CD4-positive, alpha-beta T cell (primary cell): ENCODE measurements at regions of chr19 and their contacts with region 1.

Region 1: GRCh38 chr19:20558011-20558410 is 7.6 kb downstream of the ZNF737 start:
- DNase-seq: no peak
- ATAC-seq: no peak
- H3K4me3 ChIP-seq: no peak overlapping the region
- H3K4me3 Mint-ChIP-seq: no peak overlapping the region
- H3K27ac ChIP-seq: no peak overlapping the region
- H3K27ac Mint-ChIP-seq: no peak overlapping the region
- H3K4me1 ChIP-seq: peaks cover under 1% of the 10 kb centered on the region
- H3K4me1 Mint-ChIP-seq: peaks cover 13% of the 10 kb centered on the region
- H3K27me3 ChIP-seq: no peaks in the 10 kb centered on the region
- H3K27me3 Mint-ChIP-seq: no peaks in the 10 kb centered on the region
- CTCF ChIP-seq: no peak

Region 2: DNA sequence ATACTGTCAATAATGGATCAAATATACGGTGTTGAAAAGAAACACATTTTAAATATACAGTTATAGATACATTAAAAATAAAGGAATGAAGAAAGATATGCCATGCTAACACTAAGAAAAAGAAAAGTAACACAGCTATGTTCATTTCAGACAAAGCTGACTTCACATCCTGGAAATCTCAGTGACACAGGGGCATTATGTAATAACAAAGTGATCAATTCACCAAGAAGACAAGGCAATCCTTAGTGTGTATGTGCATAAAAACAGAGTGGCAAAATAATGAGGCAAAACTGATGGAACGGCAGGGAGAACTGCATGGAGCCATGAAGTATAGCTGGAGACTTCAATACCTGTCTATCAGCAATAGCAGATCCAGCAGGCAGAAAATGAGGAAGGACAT is 838.2 kb before region 1 on chr19:
- CTCF ChIA-PET with region 1: no interaction called
- POLR2A ChIA-PET with region 1: no interaction called
- intact Hi-C with region 1: loop called in 1 of 2 experiments (anchors 10 kb)
- DNase-seq: peak in 1 of 14 experiments; percentile 28
- ATAC-seq: peak; percentile 44
- H3K4me3 ChIP-seq: no peak overlapping the region
- H3K4me3 Mint-ChIP-seq: peak overlapping the region; percentile 28
- H3K27ac ChIP-seq: no peak overlapping the region
- H3K27ac Mint-ChIP-seq: no peak overlapping the region
- H3K4me1 ChIP-seq: no peaks in the 10 kb centered on the region
- H3K4me1 Mint-ChIP-seq: peaks cover 4% of the 10 kb centered on the region
- H3K27me3 ChIP-seq: no peaks in the 10 kb centered on the region
- H3K27me3 Mint-ChIP-seq: no peaks in the 10 kb centered on the region
- CTCF ChIP-seq: no peak